ENCODE measurements at regions of chr3 and their contacts with region 1.

Region 1: GRCh38 chr3:138718849-138719248 is 110.3 kb downstream of the FAIM start:
- DNase-seq: no peak
- H3K4me3 ChIP-seq: no peak overlapping the region
- H3K27ac ChIP-seq: no peak overlapping the region
- H3K4me1 ChIP-seq: no peaks in the 10 kb centered on the region
- H3K27me3 ChIP-seq: no peaks in the 10 kb centered on the region
- CTCF ChIP-seq: no peak

Region 2: GRCh38 chr3:138578141-138578540 is 140.7 kb before region 1 on chr3:
- CTCF ChIA-PET with region 1: interaction called, 4 read pairs
- POLR2A ChIA-PET with region 1: interaction called, 14 read pairs
- intact Hi-C with region 1: no loop called
- DNase-seq: no peak
- H3K4me3 ChIP-seq: no peak overlapping the region
- H3K27ac ChIP-seq: no peak overlapping the region
- H3K4me1 ChIP-seq: no peaks in the 10 kb centered on the region
- H3K27me3 ChIP-seq: no peaks in the 10 kb centered on the region
- CTCF ChIP-seq: no peak

Measured in PC-9 (cell line).